Endothelial cell of umbilical vein (primary cell): ENCODE measurements at regions of chr11 and their contacts with region 1.

Region 1: GRCh38 chr11:124194698-124195410 is 11.7 kb downstream of the OR10D3 start:
- DNase-seq: peak; percentile 79
- H3K4me3 ChIP-seq: no peak overlapping the region
- H3K27ac ChIP-seq: no peak overlapping the region
- H3K4me1 ChIP-seq: no peaks in the 10 kb centered on the region
- H3K27me3 ChIP-seq: peaks cover 6 to 7% of the 10 kb centered on the region in 2 experiments
- CTCF ChIP-seq: peak; percentile 75 to 79
- POLR2A ChIP-seq: no peak

Region 2: DNA sequence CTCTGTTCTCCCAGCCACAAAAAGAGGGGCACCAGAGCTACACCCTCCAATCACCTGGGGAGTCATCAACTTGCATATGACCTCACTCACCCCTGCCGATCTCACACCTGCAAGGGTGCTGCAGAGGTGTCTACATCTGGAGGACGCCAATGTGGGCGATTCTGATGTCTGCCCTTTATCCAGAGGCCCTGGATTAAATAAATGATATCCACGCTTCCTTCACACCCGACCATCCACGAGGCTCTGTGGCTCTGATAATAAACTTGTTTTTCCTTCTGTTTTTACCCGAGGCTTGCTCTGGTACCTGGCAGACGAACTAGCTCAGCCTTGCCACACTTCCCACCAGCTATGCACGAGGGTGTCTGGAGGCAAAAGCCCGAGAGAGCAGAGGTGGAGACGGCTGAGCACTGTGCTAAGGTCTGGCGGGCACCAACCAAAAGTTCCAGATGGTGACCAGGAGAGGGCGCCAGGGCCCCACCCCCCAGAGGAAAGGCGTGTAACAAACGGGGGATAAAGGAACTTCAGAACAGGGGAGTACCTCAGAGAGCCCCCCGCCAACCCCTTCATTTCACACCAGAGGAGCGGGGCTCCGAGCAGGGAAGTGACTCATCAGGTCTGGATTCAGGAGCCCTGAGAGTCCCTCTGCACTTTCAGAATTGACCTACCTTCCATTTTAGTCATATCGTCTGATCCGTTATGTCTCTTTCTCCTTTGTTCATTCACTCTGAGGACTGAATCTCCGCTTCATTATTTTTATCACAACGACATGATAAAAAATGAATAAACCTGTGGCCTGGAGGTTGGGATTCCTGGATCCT is 554.0 kb before region 1 on chr11:
- CTCF ChIA-PET with region 1: no interaction called
- POLR2A ChIA-PET with region 1: no interaction called
- dilution Hi-C with region 1: no loop called
- intact Hi-C with region 1: loop called (anchors 1 kb)
- DNase-seq: peak; percentile 49
- H3K4me3 ChIP-seq: no peak overlapping the region
- H3K27ac ChIP-seq: no peak overlapping the region
- H3K4me1 ChIP-seq: no peaks in the 10 kb centered on the region
- H3K27me3 ChIP-seq: no peaks in the 10 kb centered on the region
- CTCF ChIP-seq: peak; percentile 70 to 89
- POLR2A ChIP-seq: no peak

Region 3: GRCh38 chr11:123741159-123742028 is 453.5 kb before region 1 on chr11 and contains the start of gene ZNF202:
- CTCF ChIA-PET with region 1: interaction called, 3 read pairs
- POLR2A ChIA-PET with region 1: no interaction called
- dilution Hi-C with region 1: no loop called
- intact Hi-C with region 1: loop called (anchors 5 kb)
- DNase-seq: peak; percentile 91
- H3K4me3 ChIP-seq: peak within 1 kb of the TSS; percentile 58 to 89 (median 64)
- H3K27ac ChIP-seq: peak within 1 kb of the TSS; percentile 10
- H3K4me1 ChIP-seq: peaks cover 14% of the 10 kb centered on the region
- H3K27me3 ChIP-seq: peaks cover 0 to under 1% of the 10 kb centered on the region in 2 experiments
- CTCF ChIP-seq: peak in 1 of 2 donors; percentile 0
- POLR2A ChIP-seq: peak; percentile 81
- total RNA-seq, gene ZNF202: 12.3 and 13.1 TPM in 2 replicates

Region 4: GRCh38 chr11:124108156-124108555 is 86.7 kb before region 1 on chr11:
- CTCF ChIA-PET with region 1: interaction called, 12 read pairs
- POLR2A ChIA-PET with region 1: no interaction called
- dilution Hi-C with region 1: no loop called
- intact Hi-C with region 1: loop called (anchors 1 kb)
- DNase-seq: peak; percentile 56
- H3K4me3 ChIP-seq: no peak overlapping the region
- H3K27ac ChIP-seq: no peak overlapping the region
- H3K4me1 ChIP-seq: no peaks in the 10 kb centered on the region
- H3K27me3 ChIP-seq: peaks cover 0 to 8% of the 10 kb centered on the region in 2 experiments
- CTCF ChIP-seq: peak; percentile 24 to 39
- POLR2A ChIP-seq: no peak

Region 5: DNA sequence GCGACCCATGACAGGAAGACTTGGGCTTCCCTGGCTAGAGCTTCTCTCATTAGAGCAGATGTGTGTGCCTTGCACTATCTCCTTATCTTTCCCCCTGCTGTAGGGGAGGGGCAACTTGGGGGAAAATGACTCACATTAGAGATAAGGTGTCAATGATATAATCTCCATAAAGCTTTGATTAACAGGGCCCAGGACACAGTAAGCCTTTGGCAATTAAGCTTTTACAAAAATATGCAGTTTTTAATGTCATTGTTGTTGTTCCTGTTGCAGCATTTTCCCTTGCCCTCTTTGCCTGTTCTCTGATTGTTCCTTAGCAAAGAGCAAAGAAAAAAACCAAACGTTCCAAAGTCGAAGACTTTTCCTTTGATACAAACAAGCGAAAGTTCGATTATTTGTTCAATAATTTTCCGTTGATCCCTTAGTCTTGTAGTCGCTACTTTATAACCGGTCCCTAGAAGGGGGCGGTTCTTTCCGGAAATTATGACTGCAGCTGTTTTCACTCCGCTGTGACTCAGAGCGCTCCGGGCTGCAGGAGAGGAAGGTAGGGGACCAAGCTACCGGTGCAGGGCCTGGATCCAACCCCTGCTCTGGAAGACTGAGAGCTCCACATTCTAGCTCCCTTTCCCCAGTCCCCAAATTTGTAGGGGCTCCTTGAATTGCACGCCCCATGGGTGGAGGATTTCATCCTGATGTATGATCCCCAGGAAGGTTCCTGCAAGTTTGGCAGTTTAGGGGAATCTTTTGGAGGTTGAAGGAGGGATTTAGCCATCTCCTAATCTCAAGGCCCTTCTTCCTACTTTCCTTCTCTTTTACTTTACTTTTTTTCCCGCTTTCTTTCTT is 79.7 kb before region 1 on chr11 and contains the start of gene VWA5A:
- CTCF ChIA-PET with region 1: interaction called, 17 read pairs
- POLR2A ChIA-PET with region 1: no interaction called
- dilution Hi-C with region 1: no loop called
- intact Hi-C with region 1: no loop called
- DNase-seq: peak; percentile 86
- H3K4me3 ChIP-seq: peak within 1 kb of the TSS; percentile 54 to 94 (median 75)
- H3K27ac ChIP-seq: peak within 1 kb of the TSS; percentile 52
- H3K4me1 ChIP-seq: peaks cover 19% of the 10 kb centered on the region
- H3K27me3 ChIP-seq: no peaks in the 10 kb centered on the region
- CTCF ChIP-seq: no peak
- POLR2A ChIP-seq: peak; percentile 88
- total RNA-seq, gene VWA5A: 11.6 and 14.3 TPM in 2 replicates

Region 6: DNA sequence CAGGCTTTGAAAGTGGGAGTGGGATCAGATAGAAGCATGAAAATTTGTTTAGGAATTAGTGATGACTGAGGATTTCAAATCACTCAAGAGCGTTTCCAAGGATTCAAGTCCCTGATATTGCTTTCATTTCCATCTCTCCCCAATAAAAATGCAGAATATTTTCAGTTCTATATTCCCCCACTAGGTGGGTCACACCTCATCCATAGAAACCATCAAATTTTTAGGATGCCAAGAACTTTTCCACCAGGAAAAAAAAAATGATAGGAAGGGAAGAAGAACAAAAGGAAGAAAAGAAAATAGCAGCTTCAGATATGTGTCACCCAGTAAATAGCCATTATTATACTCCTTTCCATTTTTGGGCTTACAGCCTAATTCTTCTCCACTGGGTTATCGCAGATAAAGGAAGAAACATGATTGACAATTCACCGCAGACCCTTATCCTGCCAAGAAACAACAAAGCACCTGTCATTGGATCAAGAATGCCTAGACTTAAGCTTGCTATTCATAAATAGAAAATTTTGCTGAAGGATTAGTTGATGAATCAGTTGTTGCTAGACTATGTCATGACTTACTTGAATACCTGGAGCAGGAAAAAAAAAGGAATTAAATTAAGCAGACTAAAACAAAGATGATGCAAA is 42.0 kb before region 1 on chr11:
- CTCF ChIA-PET with region 1: interaction called, 6 read pairs
- POLR2A ChIA-PET with region 1: no interaction called
- dilution Hi-C with region 1: no loop called
- intact Hi-C with region 1: loop called (anchors 2 kb)
- DNase-seq: no peak
- H3K4me3 ChIP-seq: no peak overlapping the region
- H3K27ac ChIP-seq: no peak overlapping the region
- H3K4me1 ChIP-seq: no peaks in the 10 kb centered on the region
- H3K27me3 ChIP-seq: peaks cover 2 to 6% of the 10 kb centered on the region in 2 experiments
- CTCF ChIP-seq: no peak
- POLR2A ChIP-seq: no peak

Region 7: GRCh38 chr11:124174001-124174583 is 20.8 kb before region 1 on chr11:
- CTCF ChIA-PET with region 1: interaction called, 19 read pairs
- POLR2A ChIA-PET with region 1: no interaction called
- dilution Hi-C with region 1: no loop called
- intact Hi-C with region 1: no loop called
- DNase-seq: peak; percentile 83
- H3K4me3 ChIP-seq: no peak overlapping the region
- H3K27ac ChIP-seq: no peak overlapping the region
- H3K4me1 ChIP-seq: peaks cover 5% of the 10 kb centered on the region
- H3K27me3 ChIP-seq: no peaks in the 10 kb centered on the region
- CTCF ChIP-seq: no peak
- POLR2A ChIP-seq: no peak